ENCODE measurements at regions of chr10 and their contacts with region 1.

Region 1: GRCh38 chr10:31808258-31809218 is 120.1 kb downstream of the ARHGAP12 start:
- DNase-seq: peak; percentile 17 to 62 (median 58)
- ATAC-seq: peak; percentile 82 to 84
- H3K4me3 ChIP-seq: peak overlapping the region; percentile 33
- H3K27ac ChIP-seq: peak overlapping the region; percentile 80
- H3K4me1 ChIP-seq: no peaks in the 10 kb centered on the region
- H3K27me3 ChIP-seq: no peaks in the 10 kb centered on the region

Region 2: GRCh38 chr10:30751678-30752331 is 1056.7 kb before region 1 on chr10:
- intact Hi-C with region 1: loop called in 3 of 4 experiments (anchors 10 kb)
- DNase-seq: peak; percentile 77 to 93 (median 91)
- ATAC-seq: peak; percentile 85 to 91
- H3K4me3 ChIP-seq: no peak overlapping the region
- H3K27ac ChIP-seq: peak overlapping the region; percentile 70
- H3K4me1 ChIP-seq: no peaks in the 10 kb centered on the region
- H3K27me3 ChIP-seq: no peaks in the 10 kb centered on the region

Region 3: GRCh38 chr10:31707093-31708039 is 101.2 kb before region 1 on chr10:
- intact Hi-C with region 1: loop called in 2 of 4 experiments (anchors 10 kb)
- DNase-seq: peak; percentile 83 to 91 (median 89)
- ATAC-seq: peak; percentile 85 to 95
- H3K4me3 ChIP-seq: no peak overlapping the region
- H3K27ac ChIP-seq: peak overlapping the region; percentile 94
- H3K4me1 ChIP-seq: peaks cover 17% of the 10 kb centered on the region
- H3K27me3 ChIP-seq: no peaks in the 10 kb centered on the region

Region 4: GRCh38 chr10:31770307-31770902 is 38.1 kb before region 1 on chr10:
- intact Hi-C with region 1: no loop called
- DNase-seq: peak in 2 of 3 donors; percentile 76 to 79
- ATAC-seq: peak; percentile 64 to 66
- H3K4me3 ChIP-seq: no peak overlapping the region
- H3K27ac ChIP-seq: no peak overlapping the region
- H3K4me1 ChIP-seq: no peaks in the 10 kb centered on the region
- H3K27me3 ChIP-seq: no peaks in the 10 kb centered on the region